ENCODE measurements at regions of chr3 and their contacts with region 1.

Region 1: DNA sequence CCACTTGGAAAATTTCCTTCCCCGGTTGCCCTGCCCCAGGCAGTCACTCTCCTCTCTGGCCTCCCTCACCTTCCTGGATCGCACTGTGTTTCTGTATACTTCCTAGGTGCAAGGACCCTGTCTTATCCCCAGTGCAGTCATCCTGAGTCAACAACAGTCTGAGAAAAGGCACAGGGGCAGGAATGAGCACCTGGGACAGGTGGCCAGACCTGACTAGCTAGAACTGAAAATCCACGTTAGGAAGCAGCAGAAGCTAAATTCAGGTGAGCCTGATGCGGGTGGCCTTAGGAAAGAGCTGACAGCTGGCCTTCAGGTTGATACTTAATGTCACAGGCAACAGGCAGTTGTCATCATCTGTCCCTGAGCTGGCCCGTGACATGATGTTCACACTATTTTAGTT is 62.9 kb upstream of the VGLL4 start:
- DNase-seq: peak in 1 of 2 experiments; percentile 8
- H3K4me3 ChIP-seq: no peak overlapping the region
- H3K4me3 Mint-ChIP-seq: no peak overlapping the region
- H3K27ac Mint-ChIP-seq: no peak overlapping the region
- H3K4me1 ChIP-seq: 0 out of 2 replicates have a peak, but pooled peaks cover 12% of the 10 kb centered on the region
- H3K4me1 Mint-ChIP-seq: peaks cover 7% of the 10 kb centered on the region
- H3K27me3 ChIP-seq: no peaks in the 10 kb centered on the region
- H3K27me3 Mint-ChIP-seq: no peaks in the 10 kb centered on the region
- CTCF ChIP-seq: no peak

Region 2: GRCh38 chr3:11658180-11658579 is 48.4 kb before region 1 on chr3:
- CTCF ChIA-PET with region 1: no interaction called
- POLR2A ChIA-PET with region 1: no interaction called
- intact Hi-C with region 1: no loop called
- DNase-seq: no peak
- H3K4me3 ChIP-seq: no peak overlapping the region
- H3K4me3 Mint-ChIP-seq: no peak overlapping the region
- H3K27ac Mint-ChIP-seq: no peak overlapping the region
- H3K4me1 ChIP-seq: peaks cover 14% of the 10 kb centered on the region
- H3K4me1 Mint-ChIP-seq: peaks cover 19% of the 10 kb centered on the region
- H3K27me3 ChIP-seq: no peaks in the 10 kb centered on the region
- H3K27me3 Mint-ChIP-seq: no peaks in the 10 kb centered on the region
- CTCF ChIP-seq: no peak

Region 3: GRCh38 chr3:11668243-11669232 is 38.1 kb before region 1 on chr3:
- CTCF ChIA-PET with region 1: no interaction called
- POLR2A ChIA-PET with region 1: no interaction called
- intact Hi-C with region 1: loop called (anchors 1 kb)
- DNase-seq: peak in 1 of 2 experiments; percentile 32
- H3K4me3 ChIP-seq: no peak overlapping the region
- H3K4me3 Mint-ChIP-seq: no peak overlapping the region
- H3K27ac Mint-ChIP-seq: peak overlapping the region; percentile 65
- H3K4me1 ChIP-seq: peaks cover 15% of the 10 kb centered on the region; the same call in 1 of the 2 replicates
- H3K4me1 Mint-ChIP-seq: peaks cover 27% of the 10 kb centered on the region
- H3K27me3 ChIP-seq: no peaks in the 10 kb centered on the region; the same call in 1 of the 2 replicates
- H3K27me3 Mint-ChIP-seq: no peaks in the 10 kb centered on the region
- CTCF ChIP-seq: no peak

Measured in Caco-2 (cell line).